ENCODE measurements at regions of chr5 and their contacts with region 1.

Region 1: DNA sequence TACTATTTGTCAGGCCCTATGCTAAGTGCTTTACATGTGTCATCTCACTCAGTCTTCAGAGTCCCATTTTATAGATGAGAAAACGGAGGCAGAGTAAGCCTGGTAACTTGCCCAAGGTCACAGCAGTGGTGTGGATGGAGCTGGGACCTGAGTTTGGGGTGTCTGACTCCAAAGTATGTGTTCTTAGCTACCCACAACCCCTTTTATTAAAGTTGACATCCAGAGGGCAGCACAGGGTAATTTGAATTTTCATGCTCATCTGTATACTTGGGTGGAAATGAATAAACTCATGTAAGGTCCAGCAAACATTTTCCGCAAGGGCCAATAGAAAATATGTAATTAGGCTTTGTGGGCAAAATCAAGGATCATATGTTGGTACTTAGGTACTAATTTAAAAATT is 93.4 kb upstream of the SLC25A48 start:
- DNase-seq: no peak
- H3K4me3 ChIP-seq: no peak overlapping the region
- H3K27ac ChIP-seq: no peak overlapping the region
- H3K4me1 ChIP-seq: no peaks in the 10 kb centered on the region
- H3K27me3 ChIP-seq: no peaks in the 10 kb centered on the region
- CTCF ChIP-seq: no peak

Region 2: DNA sequence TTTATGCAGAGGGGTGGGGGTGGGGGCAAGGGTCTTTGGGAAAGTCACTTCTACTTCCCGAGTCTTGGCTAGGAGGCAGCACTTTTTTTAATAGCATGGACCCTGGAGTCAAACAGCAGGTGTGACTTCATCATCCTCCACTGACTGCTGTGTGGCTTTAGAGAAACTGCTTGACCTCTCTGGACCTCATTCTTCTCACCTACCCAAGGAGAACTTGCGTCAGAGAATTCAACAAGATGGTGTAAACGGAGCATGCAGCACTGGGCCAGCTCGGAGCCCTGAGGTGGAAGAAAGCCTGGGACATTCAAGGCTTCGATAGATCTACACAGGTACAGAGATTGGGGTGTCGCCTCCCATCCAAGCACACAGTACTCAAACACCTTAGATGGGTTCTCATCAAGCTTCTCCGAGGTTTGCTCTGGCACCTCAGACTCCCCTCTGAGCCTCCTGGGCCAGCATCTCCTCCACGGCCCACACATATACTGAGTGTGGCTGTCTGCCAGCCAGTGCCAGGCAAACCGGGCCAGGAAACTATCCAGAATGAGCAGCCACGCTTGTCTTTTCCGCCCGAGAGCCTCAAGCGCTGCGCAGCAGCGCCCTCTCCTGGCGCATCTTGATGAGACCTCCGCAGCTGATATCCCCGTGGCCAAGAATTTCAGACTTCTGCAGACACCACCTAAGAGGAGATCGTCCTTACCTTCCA is 88.8 kb after region 1 on chr5:
- CTCF ChIA-PET with region 1: no interaction called
- POLR2A ChIA-PET with region 1: no interaction called
- intact Hi-C with region 1: loop called (anchors 5 kb)
- DNase-seq: peak; percentile 84
- H3K4me3 ChIP-seq: no peak overlapping the region
- H3K27ac ChIP-seq: no peak overlapping the region
- H3K4me1 ChIP-seq: no peaks in the 10 kb centered on the region
- H3K27me3 ChIP-seq: peaks cover 36% of the 10 kb centered on the region
- CTCF ChIP-seq: peak; percentile 93

Measured in A673 (cell line).